ENCODE measurements at regions of chr7 and their contacts with region 1.

Region 1: DNA sequence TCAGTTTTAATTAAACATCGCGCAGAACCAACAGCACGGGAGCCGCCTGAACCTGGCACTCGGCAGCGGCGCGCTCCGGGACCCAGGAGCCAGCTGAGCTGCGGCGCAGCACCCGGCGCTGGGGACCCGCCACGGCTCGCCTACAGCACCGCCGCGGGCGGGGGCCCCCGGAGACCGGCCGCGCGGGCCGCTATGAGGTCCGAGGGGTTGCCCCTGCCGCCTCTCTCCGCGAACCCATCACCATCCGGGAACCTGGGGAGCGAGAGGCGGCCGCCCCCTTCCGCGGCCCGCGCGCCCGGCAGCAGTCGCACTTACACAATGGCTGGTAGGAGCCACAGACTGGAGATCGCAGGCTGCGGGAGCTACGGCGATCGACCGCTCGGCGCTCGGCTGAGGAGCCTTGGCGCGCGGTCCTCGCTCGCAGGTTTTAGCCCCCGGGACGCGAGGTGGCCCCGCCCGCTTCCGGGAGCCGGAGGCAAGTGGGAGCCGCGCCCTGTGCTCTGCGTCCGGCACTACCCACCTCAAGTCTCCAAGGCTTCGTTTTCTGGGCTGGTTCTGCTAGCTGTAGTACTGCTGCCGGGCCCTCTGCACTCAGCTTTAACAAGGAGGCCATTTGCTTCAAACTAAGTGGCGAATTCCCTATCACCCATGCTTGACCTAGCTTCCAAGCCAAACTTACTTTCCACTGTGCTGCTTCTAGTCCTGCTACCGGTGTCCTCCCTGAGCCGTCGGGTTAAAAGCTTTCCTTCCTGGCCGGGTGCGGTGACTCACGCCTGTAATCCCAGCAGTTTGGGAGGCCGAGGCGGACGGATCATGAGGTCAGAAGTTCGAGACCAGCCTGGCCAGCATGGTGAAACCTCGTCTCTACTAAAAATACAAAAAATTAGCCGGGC is at the start of gene TPK1:
- DNase-seq: peak; percentile 88
- ATAC-seq: peak; percentile 85
- H3K4me3 Mint-ChIP-seq: peak within 1 kb of the TSS; percentile 98
- H3K27ac Mint-ChIP-seq: peak within 1 kb of the TSS; percentile 99
- H3K4me1 Mint-ChIP-seq: peaks cover 28% of the 10 kb centered on the region
- H3K27me3 Mint-ChIP-seq: no peaks in the 10 kb centered on the region
- CTCF ChIP-seq: no peak
- total RNA-seq, gene TPK1: 17.5 and 20.0 TPM in 2 replicates

Region 2: DNA sequence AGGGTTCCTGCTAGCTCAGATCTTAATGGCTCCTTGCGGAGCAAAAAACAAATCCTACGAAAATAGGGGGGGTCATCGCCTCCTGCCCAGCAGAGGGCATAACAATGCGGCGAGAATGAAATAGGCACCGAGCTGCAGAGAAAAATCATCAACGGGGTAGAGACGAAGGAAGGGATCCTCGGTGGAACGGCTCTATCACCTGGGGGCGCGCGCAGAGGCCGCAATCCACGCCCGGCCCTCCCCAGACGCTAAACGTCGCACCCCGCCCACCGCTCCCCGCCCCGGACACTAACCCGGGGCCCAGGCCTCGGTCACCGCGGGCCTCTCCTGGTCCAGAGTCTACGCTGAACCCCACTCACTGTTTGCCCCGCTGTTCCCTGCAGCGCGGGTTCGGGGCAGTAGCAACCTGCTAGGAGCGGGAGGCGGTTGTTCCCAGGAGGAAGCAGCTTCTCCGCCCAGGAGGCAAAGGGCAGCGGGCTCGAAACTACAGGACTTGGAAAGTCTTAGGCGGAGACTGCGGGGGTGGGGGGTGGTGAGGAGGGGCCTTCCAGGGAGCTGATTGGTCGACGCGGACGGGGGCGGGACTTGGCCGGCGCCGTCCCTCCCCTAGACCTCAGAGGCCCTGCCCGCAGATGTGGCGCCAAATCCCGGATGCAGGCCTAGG is 934.1 kb before region 1 on chr7 and contains the start of gene TCAF1:
- CTCF ChIA-PET with region 1: no interaction called
- POLR2A ChIA-PET with region 1: no interaction called
- intact Hi-C with region 1: loop called (anchors 5 kb)
- DNase-seq: peak; percentile 85
- ATAC-seq: peak; percentile 96
- H3K4me3 Mint-ChIP-seq: peak within 1 kb of the TSS; percentile 94
- H3K27ac Mint-ChIP-seq: peak within 1 kb of the TSS; percentile 88
- H3K4me1 Mint-ChIP-seq: peaks cover 23% of the 10 kb centered on the region
- H3K27me3 Mint-ChIP-seq: no peaks in the 10 kb centered on the region
- CTCF ChIP-seq: no peak
- total RNA-seq, gene TCAF1: 12.0 and 13.4 TPM in 2 replicates

Region 3: DNA sequence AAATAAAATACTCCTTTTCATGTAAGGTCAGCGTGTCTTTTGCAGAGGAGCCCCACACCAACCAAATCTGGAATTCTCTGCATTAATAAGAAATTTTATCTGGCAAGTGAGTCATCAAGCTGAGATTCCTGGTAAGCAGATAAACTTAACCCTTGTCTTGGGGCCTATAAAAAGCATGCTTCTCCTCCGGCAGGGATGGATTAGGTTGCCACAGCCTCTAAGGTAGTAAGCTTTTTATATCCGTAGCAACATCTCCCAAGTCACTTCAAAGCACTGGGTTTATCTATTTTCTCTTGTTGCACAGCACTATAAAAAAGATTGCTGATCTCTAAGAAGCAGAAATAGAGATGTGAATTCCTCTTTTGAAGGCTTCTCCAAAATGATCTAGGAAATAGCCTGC is 229.6 kb before region 1 on chr7:
- CTCF ChIA-PET with region 1: no interaction called
- POLR2A ChIA-PET with region 1: no interaction called
- intact Hi-C with region 1: no loop called
- DNase-seq: no peak
- ATAC-seq: no peak
- H3K4me3 Mint-ChIP-seq: no peak overlapping the region
- H3K27ac Mint-ChIP-seq: no peak overlapping the region
- H3K4me1 Mint-ChIP-seq: no peaks in the 10 kb centered on the region
- H3K27me3 Mint-ChIP-seq: no peaks in the 10 kb centered on the region
- CTCF ChIP-seq: no peak

Region 4: DNA sequence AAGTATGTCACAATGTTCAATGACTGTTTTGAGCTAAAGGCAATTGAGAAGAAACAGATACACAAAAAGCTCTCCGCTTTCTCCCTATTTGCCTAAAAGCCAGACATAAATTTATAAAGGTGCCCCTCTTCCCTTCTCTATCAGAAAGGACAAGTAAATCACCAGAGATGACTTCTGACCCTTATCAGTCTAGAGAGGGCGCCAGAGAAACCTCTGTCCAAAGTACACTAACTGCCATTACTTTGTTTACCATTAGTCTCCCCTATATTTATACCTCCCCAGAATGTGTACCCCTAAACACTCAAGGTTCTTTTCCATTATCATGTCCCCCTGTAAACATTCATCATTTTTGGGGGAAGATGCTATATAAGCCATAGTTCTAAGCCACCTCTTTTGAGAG is 49.4 kb before region 1 on chr7:
- CTCF ChIA-PET with region 1: interaction called, 7 read pairs
- POLR2A ChIA-PET with region 1: interaction called, 3 read pairs
- intact Hi-C with region 1: loop called (anchors 1 kb)
- DNase-seq: no peak
- ATAC-seq: peak; percentile 34
- H3K4me3 Mint-ChIP-seq: no peak overlapping the region
- H3K27ac Mint-ChIP-seq: no peak overlapping the region
- H3K4me1 Mint-ChIP-seq: peaks cover 4% of the 10 kb centered on the region
- H3K27me3 Mint-ChIP-seq: no peaks in the 10 kb centered on the region
- CTCF ChIP-seq: no peak

Region 5: DNA sequence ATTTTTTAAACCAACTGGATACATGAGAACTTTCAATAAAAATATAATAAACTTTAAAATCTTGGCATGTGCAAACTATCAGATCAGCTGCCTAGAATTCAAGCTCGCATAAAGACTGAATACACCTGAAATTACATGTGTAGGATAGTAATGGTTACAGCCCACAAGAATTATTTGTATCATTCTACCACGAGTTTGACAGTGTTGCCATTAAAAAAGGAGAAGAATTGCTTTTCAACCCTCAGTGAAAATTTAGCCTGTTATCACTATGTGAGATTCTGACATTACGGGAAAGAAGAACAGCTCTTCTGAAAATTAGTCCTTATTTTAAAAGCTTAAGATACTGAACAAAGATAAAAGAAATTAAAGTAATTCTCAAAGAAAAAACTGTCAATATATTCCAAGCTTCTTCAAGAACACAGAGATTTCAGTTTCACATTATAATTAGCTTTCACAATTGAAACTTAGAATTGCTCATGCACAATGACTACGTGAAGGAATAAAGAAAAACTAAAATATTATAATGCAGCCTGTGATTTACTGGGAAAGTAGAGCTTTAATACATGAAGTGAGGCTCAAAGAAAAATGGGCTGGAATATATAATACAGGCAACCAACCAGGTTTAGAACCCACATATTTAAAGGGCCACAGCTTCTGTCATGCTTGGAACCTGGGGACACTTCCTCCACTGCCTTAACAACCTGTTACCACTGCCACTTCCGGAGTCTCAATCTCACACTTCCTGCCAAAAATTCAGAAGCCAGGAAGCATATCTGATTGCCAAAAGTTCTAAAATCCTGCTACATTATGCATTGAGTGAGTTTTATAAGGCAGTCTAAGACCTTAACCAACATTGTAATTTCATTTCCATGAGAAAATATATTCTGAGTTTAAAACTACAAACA is 23.3 kb before region 1 on chr7:
- CTCF ChIA-PET with region 1: interaction called, 6 read pairs
- POLR2A ChIA-PET with region 1: interaction called, 117 read pairs
- intact Hi-C with region 1: loop called (anchors 1 kb)
- DNase-seq: no peak
- ATAC-seq: peak; percentile 92
- H3K4me3 Mint-ChIP-seq: peak overlapping the region; percentile 68
- H3K27ac Mint-ChIP-seq: peak overlapping the region; percentile 93
- H3K4me1 Mint-ChIP-seq: peaks cover 44% of the 10 kb centered on the region
- H3K27me3 Mint-ChIP-seq: no peaks in the 10 kb centered on the region
- CTCF ChIP-seq: no peak

Region 6: DNA sequence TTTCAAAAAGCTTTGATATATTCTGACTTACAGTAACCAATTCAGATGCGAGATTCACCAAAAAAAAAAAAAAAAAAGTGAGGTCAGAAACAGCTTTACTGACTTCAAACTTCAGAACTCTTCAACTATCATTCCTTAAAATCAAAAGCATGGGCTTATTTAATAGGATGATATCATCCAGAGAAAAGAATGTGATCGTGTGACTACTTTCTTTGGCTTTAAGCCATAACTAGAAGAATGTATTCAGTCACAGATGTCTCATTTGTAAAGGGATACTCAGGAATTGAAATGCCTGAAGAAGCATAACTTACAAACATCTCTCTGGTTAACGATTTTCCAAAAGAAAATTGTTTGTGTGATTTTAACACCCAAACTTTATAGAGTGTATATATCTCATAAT is 11.5 kb before region 1 on chr7:
- CTCF ChIA-PET with region 1: interaction called, 7 read pairs
- POLR2A ChIA-PET with region 1: interaction called, 92 read pairs
- intact Hi-C with region 1: loop called (anchors 1 kb)
- DNase-seq: no peak
- ATAC-seq: no peak
- H3K4me3 Mint-ChIP-seq: no peak overlapping the region
- H3K27ac Mint-ChIP-seq: peak overlapping the region; percentile 31
- H3K4me1 Mint-ChIP-seq: peaks cover 64% of the 10 kb centered on the region
- H3K27me3 Mint-ChIP-seq: no peaks in the 10 kb centered on the region
- CTCF ChIP-seq: no peak